MCF 10A (cell line): ENCODE measurements at regions of chr17 and their contacts with region 1.

Region 1: DNA sequence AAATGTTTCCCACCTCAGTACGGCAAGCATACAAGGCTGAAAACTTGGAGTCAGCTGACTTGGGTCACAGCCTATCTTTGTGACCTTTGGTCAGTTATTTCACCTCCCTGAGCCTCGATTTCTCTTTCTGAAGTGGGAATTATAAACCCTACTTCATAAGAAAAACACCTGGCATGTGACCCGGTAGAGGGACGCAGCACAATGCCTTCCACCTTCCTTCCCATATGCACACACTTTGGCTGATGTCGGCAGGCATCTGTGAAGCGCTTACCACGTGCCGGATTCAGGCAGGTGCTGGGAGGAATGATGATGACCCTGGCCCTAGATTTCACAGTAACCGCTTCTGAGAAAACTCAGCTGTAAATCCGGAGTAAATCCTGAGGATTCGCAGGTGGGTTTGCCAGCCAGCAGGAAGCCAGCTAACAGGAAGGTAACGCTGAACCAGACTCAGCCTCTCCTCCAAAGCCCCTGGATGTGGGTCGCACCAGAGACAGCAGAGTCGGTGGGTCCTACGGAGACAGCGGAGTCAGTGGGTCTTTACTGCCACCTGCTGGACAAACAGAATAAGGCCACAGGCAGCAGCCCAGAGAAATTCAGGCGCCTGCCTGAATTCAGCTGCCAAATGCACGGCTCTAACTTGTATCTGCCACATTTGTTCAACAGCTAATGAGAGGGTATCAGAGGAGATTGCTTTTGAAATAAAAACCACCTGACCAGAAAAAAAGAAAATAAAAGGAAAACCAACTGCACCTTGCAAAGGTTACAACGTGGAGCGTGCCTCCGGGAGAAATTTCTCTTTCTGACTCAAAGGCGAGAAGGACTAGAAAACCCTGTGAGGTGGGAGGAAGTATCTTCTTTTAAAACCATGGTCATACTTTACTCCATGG is 16.6 kb downstream of the COPRS start:
- DNase-seq: peak; percentile 65
- H3K4me3 Mint-ChIP-seq: no peak overlapping the region
- H3K27ac Mint-ChIP-seq: no peak overlapping the region
- H3K4me1 Mint-ChIP-seq: no peaks in the 10 kb centered on the region
- H3K27me3 Mint-ChIP-seq: no peaks in the 10 kb centered on the region
- CTCF ChIP-seq: peak; percentile 94

Region 2: GRCh38 chr17:31524926-31525800 is 317.3 kb before region 1 on chr17:
- CTCF ChIA-PET with region 1: interaction called, 23 read pairs
- POLR2A ChIA-PET with region 1: no interaction called
- intact Hi-C with region 1: no loop called
- DNase-seq: peak; percentile 87
- H3K4me3 Mint-ChIP-seq: no peak overlapping the region
- H3K27ac Mint-ChIP-seq: no peak overlapping the region
- H3K4me1 Mint-ChIP-seq: no peaks in the 10 kb centered on the region
- H3K27me3 Mint-ChIP-seq: no peaks in the 10 kb centered on the region
- CTCF ChIP-seq: peak; percentile 88

Region 3: GRCh38 chr17:31558748-31559644 is 283.4 kb before region 1 on chr17:
- CTCF ChIA-PET with region 1: interaction called, 185 read pairs
- POLR2A ChIA-PET with region 1: interaction called, 17 read pairs
- intact Hi-C with region 1: loop called (anchors 1 kb)
- DNase-seq: peak; percentile 77
- H3K4me3 Mint-ChIP-seq: peak overlapping the region; percentile 63
- H3K27ac Mint-ChIP-seq: no peak overlapping the region
- H3K4me1 Mint-ChIP-seq: peaks cover 19% of the 10 kb centered on the region
- H3K27me3 Mint-ChIP-seq: no peaks in the 10 kb centered on the region
- CTCF ChIP-seq: peak; percentile 85

Region 4: DNA sequence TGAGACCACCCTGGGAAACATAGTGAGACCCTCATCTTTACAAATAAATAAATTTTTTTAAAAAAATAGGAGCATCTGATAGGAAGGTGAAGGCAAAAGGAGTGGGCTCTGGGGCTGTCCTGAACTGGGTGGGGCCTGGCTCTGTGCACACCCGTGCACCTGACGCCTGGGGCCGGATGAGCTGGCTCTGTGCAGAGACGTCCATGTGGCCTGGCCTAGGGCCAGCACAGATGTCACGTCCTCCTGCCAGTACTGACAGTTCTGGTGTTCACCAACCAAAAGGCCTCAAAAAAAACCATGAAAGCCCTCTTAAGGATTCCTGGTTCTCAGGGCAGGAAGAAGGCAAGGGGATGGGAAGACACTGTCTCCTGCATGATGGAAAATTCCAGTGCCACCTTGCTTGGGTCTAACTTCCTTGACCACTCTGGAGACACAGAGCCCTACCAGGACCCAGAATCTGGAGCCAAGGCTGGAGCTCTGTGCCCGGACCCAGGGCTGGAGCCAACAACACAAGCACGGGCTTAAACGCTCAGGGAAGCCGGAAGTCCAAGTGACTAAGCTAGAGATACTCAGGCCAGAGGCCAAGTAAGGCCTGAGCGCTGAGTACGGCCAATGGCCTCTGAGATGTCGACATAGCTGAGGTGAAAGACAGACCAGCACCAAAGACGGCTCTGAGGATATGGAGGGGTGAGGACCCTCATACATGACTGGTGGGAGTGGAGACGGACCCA is 16.3 kb before region 1 on chr17:
- CTCF ChIA-PET with region 1: interaction called, 19 read pairs
- POLR2A ChIA-PET with region 1: no interaction called
- intact Hi-C with region 1: no loop called
- DNase-seq: peak; percentile 85
- H3K4me3 Mint-ChIP-seq: no peak overlapping the region
- H3K27ac Mint-ChIP-seq: peak overlapping the region; percentile 86
- H3K4me1 Mint-ChIP-seq: peaks cover 17% of the 10 kb centered on the region
- H3K27me3 Mint-ChIP-seq: no peaks in the 10 kb centered on the region
- CTCF ChIP-seq: no peak

Region 5: DNA sequence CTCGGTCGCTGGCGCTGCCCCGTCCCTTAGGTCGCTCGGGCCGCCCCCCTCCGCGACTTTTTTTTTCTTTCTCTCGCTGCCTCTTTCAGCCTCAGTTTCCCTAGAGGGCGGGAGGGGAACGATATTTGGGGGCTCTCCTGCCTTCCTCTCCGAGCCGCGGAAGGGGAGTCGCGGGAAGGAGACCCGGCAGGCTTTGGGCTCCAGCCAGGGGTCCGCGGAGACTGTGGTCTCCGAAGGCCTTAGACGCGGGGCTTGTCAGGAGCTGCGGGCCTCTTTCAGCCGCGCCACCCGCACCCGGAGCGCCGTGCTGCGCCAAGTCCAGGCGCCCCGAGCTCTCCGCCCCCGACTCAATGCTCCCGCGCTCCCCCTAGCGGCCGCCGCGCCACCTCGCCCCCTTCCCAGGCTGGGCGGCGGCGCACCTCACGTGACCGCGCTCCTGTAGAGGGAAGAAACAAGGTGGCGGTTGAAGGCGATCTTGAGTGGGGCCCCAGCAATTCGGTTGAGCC is 164.6 kb after region 1 on chr17 and contains the start of gene LRRC37B:
- CTCF ChIA-PET with region 1: no interaction called
- POLR2A ChIA-PET with region 1: no interaction called
- intact Hi-C with region 1: no loop called
- DNase-seq: peak; percentile 81
- H3K4me3 Mint-ChIP-seq: peak within 1 kb of the TSS; percentile 88
- H3K27ac Mint-ChIP-seq: peak within 1 kb of the TSS; percentile 88
- H3K4me1 Mint-ChIP-seq: peaks cover 18% of the 10 kb centered on the region
- H3K27me3 Mint-ChIP-seq: no peaks in the 10 kb centered on the region
- CTCF ChIP-seq: peak; percentile 96
- total RNA-seq, gene LRRC37B: 11.8 and 20.9 TPM in 2 replicates